AG04449 (cell line): ENCODE measurements at regions of chr11 and their contacts with region 1.

Region 1: DNA sequence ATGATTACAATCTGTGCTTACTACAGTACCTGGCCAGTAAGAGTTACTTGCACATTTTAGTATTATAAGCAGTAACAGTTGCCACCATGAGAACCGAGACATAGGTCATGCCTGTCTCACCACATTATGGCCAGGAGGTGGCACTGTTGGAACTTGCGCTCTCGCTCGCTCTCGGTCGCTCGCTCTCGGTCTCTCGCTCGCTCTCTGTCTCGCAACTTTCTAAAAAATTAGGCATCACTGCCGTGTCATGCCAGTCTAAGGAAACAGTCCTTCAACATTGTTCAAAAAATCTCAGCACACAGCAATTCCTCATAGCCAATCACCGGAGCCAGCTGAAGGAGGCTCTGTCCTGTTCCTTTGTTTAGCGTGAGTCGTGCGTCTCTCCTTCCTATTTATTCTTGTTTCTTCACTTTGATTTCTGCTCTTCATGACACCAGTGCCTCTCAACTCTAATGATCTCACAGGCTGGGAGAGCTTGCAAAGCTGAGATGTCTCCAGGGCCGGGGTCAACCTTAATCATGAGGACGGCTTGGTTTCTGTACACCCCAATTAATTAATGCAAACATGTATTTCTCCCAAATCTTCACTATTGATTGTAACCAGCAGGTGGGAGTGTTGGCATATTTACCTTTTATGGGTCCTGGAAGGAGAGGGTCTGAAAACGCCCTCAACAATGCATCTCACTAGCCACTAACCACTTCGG is 6.3 kb upstream of the ADAMTS8 start:
- DNase-seq: no peak
- H3K4me3 ChIP-seq: peak overlapping the region; percentile 65
- CTCF ChIP-seq: peak; percentile 89

Region 2: GRCh38 chr11:130103296-130103814 is 331.3 kb before region 1 on chr11:
- CTCF ChIA-PET with region 1: no interaction called
- POLR2A ChIA-PET with region 1: no interaction called
- DNase-seq: peak; percentile 88
- H3K4me3 ChIP-seq: no peak overlapping the region
- CTCF ChIP-seq: no peak

Region 3: GRCh38 chr11:130359419-130359818 is 75.3 kb before region 1 on chr11:
- CTCF ChIA-PET with region 1: no interaction called
- POLR2A ChIA-PET with region 1: no interaction called
- DNase-seq: no peak
- H3K4me3 ChIP-seq: no peak overlapping the region
- CTCF ChIP-seq: no peak

Region 4: DNA sequence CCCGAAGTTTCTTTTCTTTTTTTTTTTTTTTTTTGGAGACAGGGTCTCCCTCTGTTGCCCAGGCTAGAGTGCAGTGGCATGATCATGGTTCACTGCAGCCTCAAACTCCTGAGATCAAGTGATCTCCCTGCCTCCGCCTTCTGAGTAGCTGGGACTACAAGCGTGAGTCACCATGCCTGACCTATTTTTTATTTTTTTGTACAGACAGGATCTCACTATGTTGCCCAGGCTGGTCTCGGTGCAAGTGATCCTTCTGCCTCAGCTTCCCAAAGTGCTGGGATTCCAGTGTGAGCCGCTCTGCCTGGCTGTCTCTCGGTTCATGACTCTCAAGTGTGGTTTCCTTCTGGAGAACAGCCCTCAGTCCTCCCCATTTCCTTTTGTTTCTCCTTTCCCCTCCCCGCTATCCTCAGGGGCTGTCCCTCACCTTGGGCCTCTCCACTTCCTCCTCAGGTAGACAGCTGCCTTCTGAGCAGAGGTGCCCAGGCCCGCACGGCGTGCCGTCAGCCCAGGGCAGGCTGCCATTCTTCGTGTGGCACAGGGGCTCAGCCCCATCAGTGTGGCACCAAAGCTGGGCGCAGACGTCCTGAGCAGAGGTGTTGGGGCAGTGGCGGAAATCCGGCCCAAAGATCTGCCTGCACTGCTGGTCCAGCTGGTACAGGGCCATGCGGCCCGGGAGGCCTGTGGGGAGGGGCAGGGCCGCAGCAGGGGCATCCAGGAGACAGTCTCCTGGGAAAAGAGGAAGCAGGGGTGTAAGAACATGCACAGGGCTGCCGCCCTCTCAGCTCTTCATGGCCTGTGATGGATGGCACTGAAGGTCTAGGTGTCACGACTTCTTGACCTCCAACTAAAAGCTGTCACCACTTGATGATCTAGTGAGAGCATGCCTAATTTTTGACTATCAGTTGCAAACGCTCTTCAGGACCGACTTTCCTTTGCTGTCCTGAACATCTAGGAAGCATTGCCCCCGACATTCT is 20.3 kb before region 1 on chr11:
- CTCF ChIA-PET with region 1: interaction called, 25 read pairs
- POLR2A ChIA-PET with region 1: no interaction called
- DNase-seq: no peak
- H3K4me3 ChIP-seq: no peak overlapping the region
- CTCF ChIP-seq: no peak

Region 5: GRCh38 chr11:130545449-130546072 is 110.9 kb after region 1 on chr11:
- CTCF ChIA-PET with region 1: no interaction called
- POLR2A ChIA-PET with region 1: no interaction called
- DNase-seq: no peak
- H3K4me3 ChIP-seq: no peak overlapping the region
- CTCF ChIP-seq: no peak

Region 6: DNA sequence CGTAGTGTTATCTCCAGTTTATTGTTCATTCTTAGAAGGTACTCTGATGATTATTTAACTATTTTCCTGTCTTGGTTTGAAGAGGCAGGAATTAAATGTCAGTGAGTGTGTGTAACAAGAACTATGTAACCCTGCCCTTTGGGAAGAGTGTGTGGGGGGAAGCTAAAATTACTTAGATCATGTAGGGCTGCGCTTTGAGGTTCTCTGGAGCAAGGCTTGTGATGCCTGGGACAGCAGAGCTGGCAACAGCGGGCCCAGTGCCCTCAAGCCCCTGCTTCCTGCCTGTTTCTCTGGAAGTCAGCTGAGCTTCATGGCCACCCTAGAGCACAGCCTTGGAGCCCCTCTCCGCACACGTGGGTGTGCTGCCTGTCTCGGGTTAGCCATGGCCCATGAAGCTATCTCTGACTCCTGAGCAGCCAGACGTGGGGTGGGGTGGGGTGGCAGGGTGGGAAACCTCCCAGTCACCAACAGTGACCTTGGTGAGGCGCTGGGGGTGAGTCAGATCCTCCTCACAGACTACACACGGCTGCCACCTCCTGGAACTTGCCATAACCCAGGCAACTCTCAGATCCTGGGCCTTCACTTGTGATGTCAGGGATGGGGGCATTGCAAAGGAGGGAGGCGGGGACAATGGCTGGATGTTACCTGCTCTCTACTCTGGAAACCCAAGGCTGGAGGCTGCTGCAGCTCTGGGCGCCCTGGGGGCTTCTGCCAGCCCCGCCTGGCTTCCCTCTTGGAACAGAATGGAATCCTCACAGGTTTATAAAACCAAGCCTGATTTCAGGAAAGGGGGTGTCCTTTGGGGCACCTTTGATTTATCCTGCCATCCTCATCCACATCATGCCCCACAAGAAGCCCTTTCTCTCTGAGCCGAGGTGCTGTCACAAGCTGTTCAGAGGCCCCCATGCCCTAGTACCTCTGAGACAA is 393.0 kb after region 1 on chr11:
- CTCF ChIA-PET with region 1: interaction called, 201 read pairs
- POLR2A ChIA-PET with region 1: no interaction called
- DNase-seq: no peak
- H3K4me3 ChIP-seq: no peak overlapping the region
- CTCF ChIP-seq: peak; percentile 81

Region 7: DNA sequence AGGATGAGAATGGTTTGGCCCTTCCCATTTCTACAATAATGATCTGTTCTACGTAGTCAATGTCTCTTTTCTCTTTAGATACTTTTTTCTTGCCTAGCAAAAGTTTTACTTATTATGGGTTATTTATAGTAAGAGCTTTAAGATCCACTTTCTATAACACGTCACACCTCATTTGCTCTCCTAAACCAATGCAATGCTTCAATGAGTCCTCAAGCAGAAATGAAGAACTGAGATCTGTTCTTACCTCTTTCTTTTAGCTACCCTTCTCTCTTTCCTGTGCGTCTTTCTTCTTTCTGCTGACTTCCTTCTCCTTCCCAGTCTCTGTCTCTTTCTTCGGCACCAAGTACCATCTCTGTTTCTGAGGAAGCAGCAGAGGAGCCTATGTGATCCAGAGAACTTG is 419.8 kb after region 1 on chr11:
- CTCF ChIA-PET with region 1: interaction called, 1,136 read pairs
- POLR2A ChIA-PET with region 1: interaction called, 3 read pairs
- DNase-seq: no peak
- H3K4me3 ChIP-seq: no peak overlapping the region
- CTCF ChIP-seq: no peak

Region 8: DNA sequence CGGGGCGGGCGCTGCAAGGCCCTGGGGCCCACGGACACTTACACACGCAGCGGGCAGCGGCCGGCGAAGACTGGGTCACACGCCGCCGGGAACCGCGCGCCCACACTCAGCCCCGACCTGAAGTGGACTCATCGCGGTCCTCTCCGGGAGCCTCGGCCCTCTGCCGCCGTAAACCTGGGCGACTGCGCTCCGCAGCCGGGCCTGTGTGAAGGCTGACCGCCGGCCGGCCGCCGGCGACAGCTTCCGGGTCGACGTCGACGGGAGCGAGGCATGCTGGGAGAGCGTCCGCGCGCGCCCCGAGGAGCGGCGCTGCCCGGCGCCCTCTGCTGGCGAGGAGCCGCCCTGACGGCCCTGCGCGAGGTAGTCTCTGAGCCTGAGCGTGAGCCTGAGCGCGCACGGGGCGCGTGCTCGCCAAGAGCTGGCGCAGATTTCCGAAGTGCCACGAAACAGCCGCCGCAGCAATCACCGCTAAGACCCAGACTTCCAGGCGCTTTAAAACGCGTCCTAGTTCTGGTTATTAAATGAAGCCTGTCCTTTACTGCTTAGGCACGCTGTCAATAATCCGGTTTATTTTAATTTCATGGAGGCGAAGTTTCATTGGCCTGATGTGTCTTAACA is 481.7 kb after region 1 on chr11 and contains the start of gene SNX19:
- CTCF ChIA-PET with region 1: interaction called, 102 read pairs
- POLR2A ChIA-PET with region 1: interaction called, 3 read pairs
- DNase-seq: no peak
- H3K4me3 ChIP-seq: peak within 1 kb of the TSS; percentile 87
- CTCF ChIP-seq: peak; percentile 94